Activated CD4-positive, alpha-beta memory T cell treated with anti-CD3 and anti-CD28 coated beads for 36 hours (primary cell): ENCODE measurements at regions of chr7 and their contacts with region 1.

Region 1: DNA sequence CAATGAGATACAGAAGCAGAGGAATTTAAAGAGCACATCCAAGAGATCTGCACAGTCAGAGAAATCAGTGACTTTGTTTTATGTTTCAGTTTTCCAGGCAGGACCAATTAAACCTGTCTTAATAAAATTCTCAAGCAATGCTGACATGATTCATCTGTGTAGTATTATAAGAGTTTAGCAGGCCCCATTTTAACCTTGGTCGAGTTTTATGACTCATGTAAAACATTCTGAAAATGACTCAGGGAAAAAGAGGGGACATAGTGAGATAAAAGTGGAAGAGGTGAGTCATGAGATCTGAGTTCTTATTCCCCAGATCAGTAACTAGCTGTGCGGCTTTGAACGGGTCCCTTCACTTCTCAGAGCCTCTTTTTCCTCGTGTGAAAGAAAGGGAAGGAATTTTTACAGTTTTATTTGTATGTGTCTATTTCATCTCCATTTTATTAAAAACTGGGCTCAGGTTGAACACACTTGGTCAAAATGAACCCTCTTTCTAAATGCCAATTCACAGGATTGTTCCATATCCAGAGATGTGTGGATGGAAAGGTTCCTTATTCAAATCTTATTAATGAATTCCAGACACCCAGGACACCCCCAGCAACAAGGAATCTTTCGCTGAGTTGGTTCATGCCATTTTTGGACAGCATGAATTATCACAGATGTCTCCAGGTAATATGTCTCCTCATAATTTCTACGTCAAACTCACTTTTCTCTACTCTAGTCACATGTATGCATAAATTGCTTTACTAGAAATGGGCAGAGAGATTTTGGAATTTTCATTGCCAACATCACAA is 143.2 kb downstream of the JAZF1 start:
- DNase-seq: peak; percentile 41
- H3K4me3 Mint-ChIP-seq: no peak overlapping the region
- H3K27ac Mint-ChIP-seq: peak overlapping the region; percentile 39
- H3K4me1 Mint-ChIP-seq: peaks cover 43% of the 10 kb centered on the region
- H3K27me3 Mint-ChIP-seq: peaks cover 15% of the 10 kb centered on the region

Region 2: DNA sequence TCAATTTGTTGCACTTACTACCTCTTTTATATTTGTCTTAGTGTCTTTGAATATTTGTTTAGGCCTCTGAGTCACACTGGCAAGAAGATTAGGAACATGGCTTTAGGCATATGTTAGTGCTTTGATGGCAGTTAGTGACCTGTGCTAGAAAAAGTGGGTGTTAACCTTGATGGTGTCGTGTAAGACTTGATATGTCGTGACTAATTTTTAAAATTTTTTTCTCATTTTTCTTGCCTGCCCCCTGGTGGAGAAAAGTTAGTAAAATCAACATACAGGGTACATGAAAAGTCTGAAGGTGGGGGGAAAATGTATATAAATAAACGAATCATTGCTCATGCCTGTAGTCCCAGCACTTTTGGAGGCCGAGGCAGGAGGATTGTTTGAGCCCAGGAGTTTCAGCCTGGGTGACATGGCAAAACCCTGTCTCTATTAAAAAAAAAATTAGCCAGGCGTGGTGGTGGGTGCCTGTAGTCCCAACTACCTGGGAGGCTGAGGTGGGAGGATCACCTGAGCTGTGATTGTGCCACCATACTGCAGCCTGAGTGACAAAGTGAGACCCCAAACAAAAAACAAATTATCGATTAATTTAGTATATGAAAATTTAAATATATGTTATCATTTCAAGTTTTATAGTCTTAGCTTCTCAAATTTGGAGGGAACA is 252.9 kb before region 1 on chr7:
- CTCF ChIA-PET with region 1: interaction called, 3 read pairs
- POLR2A ChIA-PET with region 1: no interaction called
- intact Hi-C with region 1: loop called (anchors 5 kb)
- DNase-seq: no peak
- H3K4me3 Mint-ChIP-seq: no peak overlapping the region
- H3K27ac Mint-ChIP-seq: no peak overlapping the region
- H3K4me1 Mint-ChIP-seq: peaks cover 33% of the 10 kb centered on the region
- H3K27me3 Mint-ChIP-seq: no peaks in the 10 kb centered on the region

Region 3: GRCh38 chr7:28062197-28062991 is 25.0 kb after region 1 on chr7:
- CTCF ChIA-PET with region 1: interaction called, 11 read pairs
- POLR2A ChIA-PET with region 1: no interaction called
- intact Hi-C with region 1: loop called (anchors 2 kb)
- DNase-seq: peak; percentile 74
- H3K4me3 Mint-ChIP-seq: no peak overlapping the region
- H3K27ac Mint-ChIP-seq: no peak overlapping the region
- H3K4me1 Mint-ChIP-seq: peaks cover 3% of the 10 kb centered on the region
- H3K27me3 Mint-ChIP-seq: no peaks in the 10 kb centered on the region

Region 4: DNA sequence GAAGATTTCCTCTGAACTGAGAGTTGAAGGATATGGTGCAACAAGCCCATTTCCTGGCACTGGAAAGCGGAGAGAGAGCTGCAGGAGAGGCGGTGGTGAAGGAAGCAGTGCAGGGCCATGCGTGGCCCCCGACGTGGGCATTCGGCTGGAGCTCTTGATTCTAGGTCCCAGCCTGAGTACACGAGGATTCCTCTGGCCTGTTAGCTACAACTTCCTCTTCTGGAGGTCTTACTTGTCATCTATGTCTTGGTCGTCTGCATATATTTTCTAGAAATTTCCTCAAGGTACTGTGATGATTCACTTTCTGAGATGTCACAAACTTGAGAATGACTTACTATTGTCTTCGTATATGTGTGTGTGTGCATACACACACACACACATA is 202.4 kb after region 1 on chr7:
- CTCF ChIA-PET with region 1: no interaction called
- POLR2A ChIA-PET with region 1: no interaction called
- intact Hi-C with region 1: loop called (anchors 1 kb)
- DNase-seq: peak; percentile 12
- H3K4me3 Mint-ChIP-seq: no peak overlapping the region
- H3K27ac Mint-ChIP-seq: no peak overlapping the region
- H3K4me1 Mint-ChIP-seq: peaks cover 9% of the 10 kb centered on the region
- H3K27me3 Mint-ChIP-seq: peaks cover 43% of the 10 kb centered on the region